GM12878 (cell line): ENCODE measurements at regions of chr10 and their contacts with region 1.

Region 1: GRCh38 chr10:22714479-22715289 is at the start of gene PIP4K2A:
- DNase-seq: no peak
- ATAC-seq: peak; percentile 63
- H3K4me3 ChIP-seq: peak within 1 kb of the TSS; percentile 75
- H3K27ac ChIP-seq: peak within 1 kb of the TSS; percentile 81
- H3K4me1 ChIP-seq: peaks cover 7% of the 10 kb centered on the region
- H3K27me3 ChIP-seq: no peaks in the 10 kb centered on the region
- CTCF ChIP-seq: no peak
- EP300 ChIP-seq: no peak
- POLR2A ChIP-seq: peak; percentile 84
- RAD21 ChIP-seq: no peak
- polyA plus RNA-seq, gene PIP4K2A: 54.3 to 103 TPM

Region 2: GRCh38 chr10:22505911-22506685 is 208.6 kb before region 1 on chr10:
- CTCF ChIA-PET with region 1: no interaction called
- POLR2A ChIA-PET with region 1: no interaction called
- RAD21 ChIA-PET with region 1: no interaction called
- SMC1A ChIA-PET with region 1: no interaction called
- in situ Hi-C with region 1: no loop called
- intact Hi-C with region 1: no loop called
- DNase-seq: no peak
- ATAC-seq: peak; percentile 86
- H3K4me3 ChIP-seq: no peak overlapping the region
- H3K27ac ChIP-seq: no peak overlapping the region
- H3K4me1 ChIP-seq: no peaks in the 10 kb centered on the region
- H3K27me3 ChIP-seq: no peaks in the 10 kb centered on the region
- CTCF ChIP-seq: no peak
- EP300 ChIP-seq: no peak
- POLR2A ChIP-seq: no peak
- RAD21 ChIP-seq: no peak

Region 3: GRCh38 chr10:22606164-22606614 is 108.5 kb before region 1 on chr10:
- CTCF ChIA-PET with region 1: interaction called, 9 read pairs
- POLR2A ChIA-PET with region 1: interaction called, 5 read pairs
- RAD21 ChIA-PET with region 1: interaction called, 19 read pairs
- SMC1A ChIA-PET with region 1: interaction called, 18 read pairs
- in situ Hi-C with region 1: no loop called
- intact Hi-C with region 1: loop called (anchors 2 kb)
- DNase-seq: peak; percentile 93
- ATAC-seq: peak; percentile 88
- H3K4me3 ChIP-seq: peak overlapping the region; percentile 33
- H3K27ac ChIP-seq: peak overlapping the region; percentile 81
- H3K4me1 ChIP-seq: peaks cover 70% of the 10 kb centered on the region
- H3K27me3 ChIP-seq: no peaks in the 10 kb centered on the region
- CTCF ChIP-seq: no peak
- EP300 ChIP-seq: peak; percentile 79 to 89
- POLR2A ChIP-seq: peak; percentile 65
- RAD21 ChIP-seq: 0 out of 2 replicates have a peak, but pooled peaks have one; percentile 9

Region 4: GRCh38 chr10:22666287-22667092 is 48.2 kb before region 1 on chr10:
- CTCF ChIA-PET with region 1: interaction called, 8 read pairs
- POLR2A ChIA-PET with region 1: interaction called, 12 read pairs
- RAD21 ChIA-PET with region 1: interaction called, 11 read pairs
- SMC1A ChIA-PET with region 1: interaction called, 10 read pairs
- in situ Hi-C with region 1: no loop called
- intact Hi-C with region 1: loop called (anchors 5 kb)
- DNase-seq: no peak
- ATAC-seq: peak; percentile 77
- H3K4me3 ChIP-seq: peak overlapping the region; percentile 39; the same call in 1 of the 2 replicates
- H3K27ac ChIP-seq: peak overlapping the region; percentile 50
- H3K4me1 ChIP-seq: peaks cover 27% of the 10 kb centered on the region
- H3K27me3 ChIP-seq: no peaks in the 10 kb centered on the region
- CTCF ChIP-seq: no peak
- EP300 ChIP-seq: no peak
- POLR2A ChIP-seq: no peak
- RAD21 ChIP-seq: no peak

Region 5: GRCh38 chr10:22693371-22693784 is 21.3 kb before region 1 on chr10:
- CTCF ChIA-PET with region 1: interaction called, 4 read pairs
- POLR2A ChIA-PET with region 1: interaction called, 9 read pairs
- RAD21 ChIA-PET with region 1: interaction called, 14 read pairs
- SMC1A ChIA-PET with region 1: interaction called, 19 read pairs
- in situ Hi-C with region 1: no loop called
- intact Hi-C with region 1: no loop called
- DNase-seq: no peak
- ATAC-seq: peak; percentile 45
- H3K4me3 ChIP-seq: no peak overlapping the region; the same call in 1 of the 2 replicates
- H3K27ac ChIP-seq: peak overlapping the region; percentile 63
- H3K4me1 ChIP-seq: peaks cover 25% of the 10 kb centered on the region
- H3K27me3 ChIP-seq: no peaks in the 10 kb centered on the region
- CTCF ChIP-seq: no peak
- EP300 ChIP-seq: no peak
- POLR2A ChIP-seq: no peak
- RAD21 ChIP-seq: no peak

Region 6: GRCh38 chr10:22765660-22766547 is 51.2 kb after region 1 on chr10:
- CTCF ChIA-PET with region 1: no interaction called
- POLR2A ChIA-PET with region 1: interaction called, 4 read pairs
- RAD21 ChIA-PET with region 1: interaction called, 4 read pairs
- SMC1A ChIA-PET with region 1: interaction called, 5 read pairs
- in situ Hi-C with region 1: no loop called
- intact Hi-C with region 1: loop called (anchors 5 kb)
- DNase-seq: peak; percentile 80
- ATAC-seq: peak; percentile 91
- H3K4me3 ChIP-seq: no peak overlapping the region
- H3K27ac ChIP-seq: peak overlapping the region; percentile 65
- H3K4me1 ChIP-seq: peaks cover 32% of the 10 kb centered on the region
- H3K27me3 ChIP-seq: no peaks in the 10 kb centered on the region
- CTCF ChIP-seq: no peak
- EP300 ChIP-seq: peak; percentile 66 to 83; a peak in 3 of 4 replicates
- POLR2A ChIP-seq: no peak
- RAD21 ChIP-seq: peak; percentile 2; the same call in 1 of the 2 replicates